ENCODE measurements at regions of chr17 and their contacts with region 1.

Region 1: GRCh38 chr17:48878918-48879898 is 13.4 kb upstream of the ATP5MC1 start:
- DNase-seq: peak; percentile 73
- H3K4me3 Mint-ChIP-seq: no peak overlapping the region
- H3K27ac Mint-ChIP-seq: no peak overlapping the region
- H3K4me1 Mint-ChIP-seq: peaks cover 11% of the 10 kb centered on the region
- H3K27me3 Mint-ChIP-seq: peaks cover 4% of the 10 kb centered on the region

Region 2: DNA sequence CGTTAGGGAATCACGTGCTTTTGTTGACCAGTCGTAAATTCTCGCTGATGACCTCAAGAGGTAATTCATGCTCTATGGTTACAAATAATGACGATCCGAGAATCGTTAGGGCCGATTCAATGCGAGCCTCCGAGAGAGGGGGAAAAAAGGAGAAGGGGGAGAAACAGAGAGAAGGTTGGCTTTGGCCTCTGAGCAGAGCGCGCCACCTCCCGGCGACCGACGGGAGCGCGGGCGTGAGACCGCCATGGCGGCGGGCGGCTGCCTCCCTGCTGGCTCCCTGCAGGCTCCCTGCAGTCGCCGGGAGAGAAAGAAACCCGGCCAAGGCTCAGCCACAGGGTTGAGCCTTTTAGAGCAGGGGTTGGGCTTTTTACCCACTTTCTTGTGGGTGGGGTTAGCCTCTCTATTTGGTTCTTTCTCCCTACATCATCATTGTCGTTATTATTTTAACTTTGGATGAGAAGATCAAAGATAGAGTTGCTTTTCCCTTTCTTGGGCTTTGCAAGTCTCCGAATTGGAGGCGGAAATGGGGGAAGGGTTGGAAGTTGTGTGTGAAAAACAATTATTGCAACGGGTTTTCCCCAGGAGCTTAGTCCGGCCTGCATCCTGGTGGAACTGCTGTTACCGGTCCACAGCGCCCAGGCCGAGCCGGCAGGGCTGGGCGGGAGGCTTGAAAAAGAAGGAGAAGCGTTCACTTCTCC is 285.2 kb before region 1 on chr17:
- CTCF ChIA-PET with region 1: no interaction called
- POLR2A ChIA-PET with region 1: no interaction called
- DNase-seq: peak; percentile 78
- H3K4me3 Mint-ChIP-seq: peak overlapping the region; percentile 65
- H3K27ac Mint-ChIP-seq: no peak overlapping the region
- H3K4me1 Mint-ChIP-seq: peaks cover 59% of the 10 kb centered on the region
- H3K27me3 Mint-ChIP-seq: peaks cover 91% of the 10 kb centered on the region

Region 3: DNA sequence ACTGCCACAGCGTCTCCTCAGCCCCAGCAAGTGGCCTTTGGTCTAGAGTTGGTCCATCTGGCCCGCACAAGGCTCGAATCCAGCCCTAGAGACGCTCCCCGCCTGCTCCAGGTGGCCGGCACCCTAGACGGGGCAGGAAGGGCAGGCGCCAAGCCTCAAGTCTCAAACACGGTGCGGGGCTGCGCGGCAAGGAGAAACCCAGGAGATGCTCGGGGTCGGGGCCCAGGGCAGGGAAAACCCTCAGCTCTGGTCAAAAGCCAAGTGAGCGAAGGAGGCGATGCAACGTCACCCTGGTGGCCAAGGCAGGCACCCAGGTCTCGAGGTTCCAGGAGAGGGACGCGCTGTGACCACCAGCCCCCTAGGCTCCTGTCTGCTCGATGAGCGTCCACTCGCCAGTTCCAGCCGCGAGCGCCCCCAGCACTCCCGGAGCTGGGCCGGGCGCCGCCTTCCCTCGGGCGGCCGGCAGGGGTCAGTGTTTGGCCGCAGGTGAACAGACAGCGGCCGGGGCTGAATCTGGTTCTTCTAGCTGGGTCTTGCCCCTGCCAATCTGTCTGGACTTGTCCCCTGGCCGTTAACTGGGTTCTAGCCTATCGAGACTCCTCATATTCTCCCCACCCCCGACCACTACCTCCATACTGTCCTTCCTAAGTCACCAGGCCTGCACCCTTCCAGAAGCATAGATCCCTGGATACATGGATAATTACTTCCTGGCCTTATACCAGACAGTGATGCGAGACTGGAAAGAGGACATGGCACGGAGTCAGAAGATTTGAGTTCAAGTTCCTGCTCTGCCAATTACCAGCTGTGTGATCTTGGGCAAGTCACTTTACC is 200.9 kb before region 1 on chr17:
- CTCF ChIA-PET with region 1: interaction called, 14 read pairs
- POLR2A ChIA-PET with region 1: no interaction called
- DNase-seq: peak; percentile 67
- H3K4me3 Mint-ChIP-seq: no peak overlapping the region
- H3K27ac Mint-ChIP-seq: no peak overlapping the region
- H3K4me1 Mint-ChIP-seq: peaks cover 4% of the 10 kb centered on the region
- H3K27me3 Mint-ChIP-seq: peaks cover 60% of the 10 kb centered on the region

Region 4: GRCh38 chr17:48799069-48799723 is 80.0 kb before region 1 on chr17:
- CTCF ChIA-PET with region 1: interaction called, 42 read pairs
- POLR2A ChIA-PET with region 1: no interaction called
- DNase-seq: no peak
- H3K4me3 Mint-ChIP-seq: no peak overlapping the region
- H3K27ac Mint-ChIP-seq: no peak overlapping the region
- H3K4me1 Mint-ChIP-seq: no peaks in the 10 kb centered on the region
- H3K27me3 Mint-ChIP-seq: peaks cover 38% of the 10 kb centered on the region

Region 5: GRCh38 chr17:48816774-48817590 is 62.2 kb before region 1 on chr17 and contains the start of gene TTLL6:
- CTCF ChIA-PET with region 1: interaction called, 96 read pairs
- POLR2A ChIA-PET with region 1: no interaction called
- DNase-seq: peak; percentile 87
- H3K4me3 Mint-ChIP-seq: peak within 1 kb of the TSS; percentile 67
- H3K27ac Mint-ChIP-seq: no peak within 1 kb of the TSS
- H3K4me1 Mint-ChIP-seq: peaks cover 16% of the 10 kb centered on the region
- H3K27me3 Mint-ChIP-seq: peaks cover 59% of the 10 kb centered on the region
- total RNA-seq, gene TTLL6: not detected

Region 6: GRCh38 chr17:48841395-48841831 is 37.8 kb before region 1 on chr17:
- CTCF ChIA-PET with region 1: interaction called, 13 read pairs
- POLR2A ChIA-PET with region 1: no interaction called
- DNase-seq: peak; percentile 75
- H3K4me3 Mint-ChIP-seq: peak overlapping the region; percentile 73
- H3K27ac Mint-ChIP-seq: peak overlapping the region; percentile 90
- H3K4me1 Mint-ChIP-seq: peaks cover 62% of the 10 kb centered on the region
- H3K27me3 Mint-ChIP-seq: no peaks in the 10 kb centered on the region

Region 7: DNA sequence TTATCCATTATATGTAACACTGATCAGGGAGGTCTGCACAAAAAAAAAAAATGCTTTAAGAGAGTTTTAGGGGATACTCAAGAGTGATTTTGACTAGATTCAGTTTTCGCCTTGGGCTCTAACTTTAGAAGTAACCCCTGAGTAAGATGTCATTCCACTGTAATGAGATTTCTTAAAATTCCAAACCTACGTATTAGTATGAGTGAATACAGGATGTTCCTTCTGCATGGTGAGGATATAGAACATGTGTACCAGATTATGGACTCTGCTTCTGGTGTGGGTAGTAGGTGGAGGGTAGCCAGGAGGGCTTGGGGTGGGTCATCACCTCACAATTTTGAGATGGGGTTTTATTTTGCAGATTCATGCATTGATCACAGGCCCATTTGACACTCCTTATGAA is 33.3 kb after region 1 on chr17:
- CTCF ChIA-PET with region 1: no interaction called
- POLR2A ChIA-PET with region 1: no interaction called
- DNase-seq: no peak
- H3K4me3 Mint-ChIP-seq: no peak overlapping the region
- H3K27ac Mint-ChIP-seq: peak overlapping the region; percentile 69
- H3K4me1 Mint-ChIP-seq: peaks cover 76% of the 10 kb centered on the region
- H3K27me3 Mint-ChIP-seq: no peaks in the 10 kb centered on the region

Region 8: GRCh38 chr17:48981927-48982539 is 102.8 kb after region 1 on chr17:
- CTCF ChIA-PET with region 1: no interaction called
- POLR2A ChIA-PET with region 1: no interaction called
- DNase-seq: no peak
- H3K4me3 Mint-ChIP-seq: no peak overlapping the region
- H3K27ac Mint-ChIP-seq: no peak overlapping the region
- H3K4me1 Mint-ChIP-seq: no peaks in the 10 kb centered on the region
- H3K27me3 Mint-ChIP-seq: peaks cover 35% of the 10 kb centered on the region

Region 9: DNA sequence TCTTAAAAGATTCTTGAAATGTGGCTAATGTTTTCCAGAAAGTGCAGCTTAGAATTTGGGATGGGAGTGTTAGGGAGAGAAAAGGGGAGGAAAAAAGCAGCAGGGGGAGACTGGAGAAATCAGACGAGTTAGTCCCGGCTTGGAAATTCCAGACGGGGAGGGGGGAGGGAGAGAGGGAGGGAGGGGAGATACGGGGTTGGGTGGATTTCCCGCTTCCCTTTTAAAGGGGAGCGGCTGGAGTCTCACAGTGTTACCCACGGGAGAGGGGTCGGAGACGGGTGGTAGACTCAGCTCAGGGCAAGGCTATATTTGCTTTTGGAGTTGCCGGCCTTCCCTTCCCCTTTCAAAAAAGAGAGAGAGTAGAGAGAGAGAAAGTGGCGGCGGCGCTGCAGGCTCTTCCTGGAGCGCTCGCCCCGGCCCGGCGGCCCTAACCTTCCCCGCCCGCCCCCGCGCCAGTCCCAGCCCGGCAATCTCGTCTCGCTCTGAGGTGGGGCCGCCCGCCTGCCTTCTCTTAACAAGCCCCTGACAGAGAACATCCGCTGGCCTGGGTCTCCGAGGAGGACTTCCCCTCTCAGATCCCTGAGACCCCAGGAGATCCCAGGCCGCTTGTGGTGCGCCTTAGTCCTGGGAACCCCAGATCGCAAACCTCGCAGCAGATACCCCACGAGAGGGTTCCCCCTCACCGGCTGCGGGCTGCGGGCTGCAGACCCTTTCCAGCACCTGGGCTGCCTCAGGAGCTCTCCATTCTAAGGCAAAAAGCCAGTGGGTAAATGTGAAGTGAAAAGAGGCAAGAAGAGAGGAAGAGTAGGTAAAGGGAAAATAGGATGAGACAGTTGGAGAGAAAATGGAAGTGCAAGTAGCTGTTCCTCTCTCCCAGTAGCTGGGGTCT is 124.7 kb after region 1 on chr17:
- CTCF ChIA-PET with region 1: no interaction called
- POLR2A ChIA-PET with region 1: no interaction called
- DNase-seq: no peak
- H3K4me3 Mint-ChIP-seq: no peak overlapping the region
- H3K27ac Mint-ChIP-seq: no peak overlapping the region
- H3K4me1 Mint-ChIP-seq: no peaks in the 10 kb centered on the region
- H3K27me3 Mint-ChIP-seq: peaks cover 90% of the 10 kb centered on the region

Measured in activated CD4-positive, alpha-beta T cell treated with anti-CD3 and anti-CD28 coated beads, Interleukin-2, amount 10 ng/mL, durations not matched to agents 7 days and 5 days (primary cell).